Activated CD4-positive, alpha-beta T cell treated with anti-CD3 and anti-CD28 coated beads for 36 hours (primary cell): ENCODE measurements at regions of chr4 and their contacts with region 1.

Region 1: DNA sequence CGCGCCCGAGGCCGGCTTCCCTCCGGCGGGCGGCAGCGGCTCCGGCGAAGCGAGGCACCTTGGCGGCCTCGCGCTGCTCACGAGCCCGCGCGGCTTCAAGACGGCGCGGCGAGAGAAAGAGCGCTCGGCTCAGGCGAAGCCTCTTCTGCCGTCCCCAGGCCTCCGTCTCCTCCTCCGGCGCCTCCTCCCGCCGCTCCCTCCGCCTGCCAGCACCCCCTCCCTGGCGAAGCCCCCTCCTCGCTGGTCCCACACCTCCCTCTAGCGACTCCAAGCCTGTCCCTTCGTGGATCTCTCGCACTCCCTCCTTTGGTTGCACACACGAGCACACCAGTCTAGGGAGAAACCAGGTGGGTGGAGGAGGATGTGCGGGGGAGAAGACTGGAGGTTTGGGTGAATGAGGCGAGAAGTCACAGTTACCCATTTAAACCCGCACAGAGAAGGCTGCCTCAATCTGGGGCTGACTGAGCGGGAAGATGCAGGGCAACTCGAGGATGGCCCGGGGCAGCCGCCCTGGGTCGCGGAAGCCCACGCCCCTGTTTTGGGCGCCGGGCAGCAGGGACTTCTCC is at the start of gene CAMK2D:
- DNase-seq: peak; percentile 93
- ATAC-seq: peak; percentile 62
- H3K4me3 Mint-ChIP-seq: peak within 1 kb of the TSS; percentile 97
- H3K27ac Mint-ChIP-seq: peak within 1 kb of the TSS; percentile 98
- H3K4me1 Mint-ChIP-seq: peaks cover 46% of the 10 kb centered on the region
- H3K27me3 Mint-ChIP-seq: no peaks in the 10 kb centered on the region
- total RNA-seq, gene CAMK2D: 70.3 to 71.3 TPM

Region 2: GRCh38 chr4:112636688-112637551 is 1124.8 kb before region 1 on chr4 and contains the starts of genes LARP7 and ZGRF1:
- CTCF ChIA-PET with region 1: no interaction called
- POLR2A ChIA-PET with region 1: no interaction called
- intact Hi-C with region 1: loop called in 1 of 2 experiments (anchors 5 kb)
- DNase-seq: peak; percentile 99
- ATAC-seq: peak; percentile 95
- H3K4me3 Mint-ChIP-seq: no peak within 1 kb of the TSS
- H3K27ac Mint-ChIP-seq: peak within 1 kb of the TSS; percentile 68
- H3K4me1 Mint-ChIP-seq: peaks cover 23% of the 10 kb centered on the region
- H3K27me3 Mint-ChIP-seq: no peaks in the 10 kb centered on the region
- total RNA-seq, gene LARP7: 46.5 to 47.1 TPM
- total RNA-seq, gene ZGRF1: 38.4 to 45.0 TPM

Region 3: GRCh38 chr4:113394730-113395530 is 366.8 kb before region 1 on chr4:
- CTCF ChIA-PET with region 1: interaction called, 4 read pairs
- POLR2A ChIA-PET with region 1: no interaction called
- intact Hi-C with region 1: loop called (anchors 1 to 2 kb)
- DNase-seq: peak; percentile 64
- ATAC-seq: peak; percentile 97
- H3K4me3 Mint-ChIP-seq: no peak overlapping the region
- H3K27ac Mint-ChIP-seq: no peak overlapping the region
- H3K4me1 Mint-ChIP-seq: peaks cover 8% of the 10 kb centered on the region
- H3K27me3 Mint-ChIP-seq: peaks cover 2% of the 10 kb centered on the region

Region 4: DNA sequence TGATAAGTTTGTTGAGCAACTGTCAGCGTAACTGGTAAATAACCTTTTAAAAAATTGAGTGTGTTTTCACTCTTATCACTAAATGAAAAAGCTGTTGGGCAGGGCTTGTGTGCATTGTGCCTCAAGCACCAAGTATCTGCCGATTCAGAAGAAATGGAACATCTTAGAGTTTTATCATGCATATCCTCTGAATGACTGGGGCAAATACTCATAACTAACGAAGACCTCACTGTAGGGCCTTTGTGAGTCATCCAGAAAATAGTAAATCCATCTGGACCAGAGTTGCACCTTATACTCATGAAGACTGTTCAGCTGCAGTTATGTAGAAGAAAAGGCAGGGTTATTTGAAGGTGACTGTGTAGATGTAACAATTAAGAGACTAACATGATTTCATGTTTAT is 222.3 kb before region 1 on chr4:
- CTCF ChIA-PET with region 1: interaction called, 4 read pairs
- POLR2A ChIA-PET with region 1: interaction called, 5 read pairs
- intact Hi-C with region 1: loop called (anchors 1 kb)
- DNase-seq: peak; percentile 50
- ATAC-seq: peak; percentile 87
- H3K4me3 Mint-ChIP-seq: no peak overlapping the region
- H3K27ac Mint-ChIP-seq: peak overlapping the region; percentile 83
- H3K4me1 Mint-ChIP-seq: peaks cover 34% of the 10 kb centered on the region
- H3K27me3 Mint-ChIP-seq: no peaks in the 10 kb centered on the region

Region 5: DNA sequence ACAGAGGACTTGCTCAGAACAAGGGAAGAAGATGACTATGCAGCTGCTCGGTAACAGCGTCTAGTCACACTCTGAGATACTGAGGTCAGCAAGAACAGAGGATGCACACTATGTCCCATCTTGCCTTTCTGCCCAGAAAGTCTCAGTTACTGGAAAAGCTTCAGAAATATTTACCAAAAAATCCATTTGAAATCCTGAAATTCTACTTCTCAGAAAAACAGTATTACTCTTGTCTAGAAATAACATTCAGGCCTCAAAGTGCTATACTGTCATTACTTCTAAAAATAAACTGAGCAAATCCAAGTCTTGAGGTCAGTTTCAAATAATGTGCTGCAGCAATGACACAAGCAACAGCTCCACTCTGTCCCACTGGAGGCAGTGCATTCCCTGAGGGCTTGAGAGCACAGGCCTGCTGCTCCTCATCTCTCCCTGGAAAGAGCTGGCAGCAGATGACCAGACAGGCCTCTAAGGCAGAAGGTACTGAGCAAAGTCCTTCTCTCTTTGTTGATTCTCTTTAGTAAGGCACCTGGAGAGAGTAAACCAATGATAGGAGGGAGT is 77.1 kb before region 1 on chr4:
- CTCF ChIA-PET with region 1: no interaction called
- POLR2A ChIA-PET with region 1: interaction called, 4 read pairs
- intact Hi-C with region 1: loop called (anchors 1 kb)
- DNase-seq: peak; percentile 67
- ATAC-seq: peak; percentile 83
- H3K4me3 Mint-ChIP-seq: peak overlapping the region; percentile 32
- H3K27ac Mint-ChIP-seq: peak overlapping the region; percentile 95
- H3K4me1 Mint-ChIP-seq: peaks cover 84% of the 10 kb centered on the region
- H3K27me3 Mint-ChIP-seq: no peaks in the 10 kb centered on the region

Region 6: GRCh38 chr4:113869743-113870375 is 108.2 kb after region 1 on chr4:
- CTCF ChIA-PET with region 1: no interaction called
- POLR2A ChIA-PET with region 1: no interaction called
- intact Hi-C with region 1: loop called (anchors 1 to 2 kb)
- DNase-seq: peak; percentile 81
- ATAC-seq: peak; percentile 94
- H3K4me3 Mint-ChIP-seq: peak overlapping the region; percentile 26
- H3K27ac Mint-ChIP-seq: peak overlapping the region; percentile 85
- H3K4me1 Mint-ChIP-seq: peaks cover 38% of the 10 kb centered on the region
- H3K27me3 Mint-ChIP-seq: no peaks in the 10 kb centered on the region